ENCODE measurements at regions of chr5 and their contacts with region 1.

Region 1: GRCh38 chr5:54443270-54443669 is 12.2 kb upstream of the HSPB3 start:
- DNase-seq: peak in 1 of 5 donors; percentile 17
- H3K4me3 ChIP-seq: no peak overlapping the region
- H3K27ac ChIP-seq: no peak overlapping the region
- H3K4me1 ChIP-seq: no peaks in the 10 kb centered on the region
- H3K27me3 ChIP-seq: no peaks in the 10 kb centered on the region
- CTCF ChIP-seq: peak; percentile 14 to 54 (median 39)
- EP300 ChIP-seq: no peak
- POLR2A ChIP-seq: no peak

Region 2: GRCh38 chr5:54063817-54064216 is 379.5 kb before region 1 on chr5:
- intact Hi-C with region 1: no loop called
- DNase-seq: no peak
- H3K4me3 ChIP-seq: no peak overlapping the region
- H3K27ac ChIP-seq: no peak overlapping the region
- H3K4me1 ChIP-seq: no peaks in the 10 kb centered on the region
- H3K27me3 ChIP-seq: no peaks in the 10 kb centered on the region
- CTCF ChIP-seq: no peak
- EP300 ChIP-seq: no peak
- POLR2A ChIP-seq: no peak

Region 3: GRCh38 chr5:54263447-54263846 is 179.8 kb before region 1 on chr5:
- intact Hi-C with region 1: no loop called
- DNase-seq: no peak
- H3K4me3 ChIP-seq: no peak overlapping the region
- H3K27ac ChIP-seq: no peak overlapping the region
- H3K4me1 ChIP-seq: peaks cover 2% of the 10 kb centered on the region
- H3K27me3 ChIP-seq: no peaks in the 10 kb centered on the region
- CTCF ChIP-seq: no peak
- EP300 ChIP-seq: no peak
- POLR2A ChIP-seq: no peak

Region 4: DNA sequence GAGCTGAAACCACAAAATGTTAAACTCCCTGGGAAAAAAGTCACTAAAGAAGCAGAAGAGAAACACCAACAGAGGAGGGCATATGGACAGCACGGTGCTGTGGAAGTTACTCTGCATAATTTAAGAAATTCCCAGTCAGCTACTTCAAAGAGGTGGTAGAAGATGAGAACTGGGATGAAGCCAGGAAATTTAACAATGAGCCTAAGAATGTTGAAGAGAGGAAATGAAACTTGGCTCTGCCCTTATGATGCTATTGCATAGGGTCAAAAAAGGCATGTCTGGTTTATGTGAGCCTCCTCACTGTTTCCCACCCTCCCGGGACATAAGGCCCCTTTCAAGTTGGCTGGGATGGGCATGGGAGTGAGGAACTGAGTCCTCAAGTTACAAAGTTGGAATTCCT is 48.9 kb after region 1 on chr5:
- intact Hi-C with region 1: loop called in 3 of 4 experiments (anchors 2 to 10 kb)
- DNase-seq: no peak
- H3K4me3 ChIP-seq: no peak overlapping the region
- H3K27ac ChIP-seq: no peak overlapping the region
- H3K4me1 ChIP-seq: no peaks in the 10 kb centered on the region
- H3K27me3 ChIP-seq: no peaks in the 10 kb centered on the region
- CTCF ChIP-seq: no peak
- EP300 ChIP-seq: no peak
- POLR2A ChIP-seq: no peak

Measured in ovary (tissue), 10 donors.